ENCODE measurements at regions of chr2 and their contacts with region 1.

Region 1: DNA sequence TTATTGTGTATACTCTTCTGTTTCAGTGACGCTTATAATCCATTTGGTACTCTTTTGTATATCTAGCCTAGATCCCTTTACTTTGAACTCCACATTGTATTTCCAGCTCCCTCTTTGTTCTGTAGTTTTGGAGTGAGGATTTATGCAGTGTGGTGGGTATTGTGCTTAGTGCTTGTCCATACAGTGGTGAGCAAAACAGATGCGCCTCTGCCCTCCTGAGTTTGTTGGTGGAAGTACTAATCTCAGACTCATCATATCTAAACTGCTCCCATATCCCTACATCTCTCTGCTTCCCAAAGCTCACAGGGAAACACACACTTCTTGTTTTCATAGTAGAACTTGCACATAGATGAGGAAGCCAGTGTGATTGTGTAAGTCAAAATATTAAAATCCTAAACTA is 12.1 kb downstream of the PTCD3 start:
- DNase-seq: no peak
- ATAC-seq: no peak
- H3K4me3 Mint-ChIP-seq: no peak overlapping the region
- H3K27ac Mint-ChIP-seq: peak overlapping the region; percentile 26
- H3K4me1 Mint-ChIP-seq: no peaks in the 10 kb centered on the region
- H3K27me3 Mint-ChIP-seq: no peaks in the 10 kb centered on the region

Region 2: DNA sequence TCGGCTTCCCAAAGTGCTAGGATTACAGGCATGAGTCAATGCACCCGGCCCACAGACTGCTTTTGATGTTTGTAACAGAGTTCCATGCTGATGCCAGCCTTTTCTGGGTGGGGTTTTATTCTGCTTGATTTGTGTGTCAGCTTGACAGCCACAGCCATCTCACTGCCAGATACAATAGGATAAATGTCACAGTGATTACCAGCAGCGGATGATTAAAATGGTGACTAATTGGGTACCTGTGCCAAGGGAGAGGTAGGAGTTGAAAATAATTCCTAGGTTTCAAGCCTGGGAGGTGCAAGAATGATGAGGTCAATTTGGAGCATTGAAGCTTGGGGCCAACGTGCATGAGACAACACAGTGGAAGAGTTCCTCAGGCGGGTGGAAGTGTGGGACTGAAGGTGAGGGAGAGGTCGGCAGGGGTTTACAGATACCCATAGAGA is 660.2 kb before region 1 on chr2:
- CTCF ChIA-PET with region 1: no interaction called
- POLR2A ChIA-PET with region 1: no interaction called
- intact Hi-C with region 1: no loop called
- DNase-seq: no peak
- ATAC-seq: no peak
- H3K4me3 Mint-ChIP-seq: no peak overlapping the region
- H3K27ac Mint-ChIP-seq: no peak overlapping the region
- H3K4me1 Mint-ChIP-seq: no peaks in the 10 kb centered on the region
- H3K27me3 Mint-ChIP-seq: no peaks in the 10 kb centered on the region

Region 3: DNA sequence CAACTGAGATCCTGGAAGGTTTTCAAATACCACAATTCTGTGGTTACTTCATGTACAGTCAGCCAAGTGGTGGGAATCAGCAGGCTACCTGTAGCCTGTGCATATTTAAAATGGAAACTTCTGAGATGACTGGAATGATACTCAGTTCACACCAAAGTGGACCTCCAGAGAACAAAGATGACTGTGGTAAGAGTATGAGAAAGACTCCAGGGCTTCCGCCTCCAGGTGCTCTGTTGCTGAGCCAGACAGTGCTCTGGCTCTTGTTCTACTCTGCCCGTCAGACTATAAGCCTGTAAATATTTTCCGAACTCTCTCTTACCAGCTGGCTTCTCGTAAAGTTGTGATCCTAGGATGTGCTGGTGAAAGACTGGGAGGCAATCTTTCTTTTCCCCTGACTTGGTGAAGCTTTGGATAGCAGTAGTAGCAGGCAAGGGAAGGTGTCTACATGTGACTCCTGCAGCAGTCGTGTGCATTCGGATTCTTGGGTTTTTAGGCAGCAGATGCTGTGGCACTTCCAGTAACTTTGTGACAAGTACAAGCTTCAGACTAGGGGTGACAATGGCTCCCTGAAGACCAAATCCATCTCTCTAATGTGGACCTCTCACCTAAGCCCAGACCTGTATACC is 252.5 kb before region 1 on chr2:
- CTCF ChIA-PET with region 1: no interaction called
- POLR2A ChIA-PET with region 1: no interaction called
- intact Hi-C with region 1: no loop called
- DNase-seq: peak; percentile 61
- ATAC-seq: peak; percentile 89
- H3K4me3 Mint-ChIP-seq: no peak overlapping the region
- H3K27ac Mint-ChIP-seq: no peak overlapping the region
- H3K4me1 Mint-ChIP-seq: peaks cover 54% of the 10 kb centered on the region
- H3K27me3 Mint-ChIP-seq: no peaks in the 10 kb centered on the region

Region 4: GRCh38 chr2:86087936-86088850 is 29.9 kb before region 1 on chr2:
- CTCF ChIA-PET with region 1: interaction called, 12 read pairs
- POLR2A ChIA-PET with region 1: no interaction called
- intact Hi-C with region 1: no loop called
- DNase-seq: peak; percentile 36
- ATAC-seq: no peak
- H3K4me3 Mint-ChIP-seq: no peak overlapping the region
- H3K27ac Mint-ChIP-seq: no peak overlapping the region
- H3K4me1 Mint-ChIP-seq: no peaks in the 10 kb centered on the region
- H3K27me3 Mint-ChIP-seq: no peaks in the 10 kb centered on the region